ENCODE measurements at regions of chr19 and their contacts with region 1.

Region 1: GRCh38 chr19:39052243-39052746 is 19.9 kb upstream of the FBXO27 start:
- DNase-seq: peak; percentile 53
- H3K4me3 ChIP-seq: no peak overlapping the region
- H3K27ac ChIP-seq: no peak overlapping the region
- H3K4me1 ChIP-seq: no peaks in the 10 kb centered on the region
- H3K27me3 ChIP-seq: peaks cover 0 to 1% of the 10 kb centered on the region in 2 experiments
- CTCF ChIP-seq: peak; percentile 79 to 89
- POLR2A ChIP-seq: no peak

Region 2: GRCh38 chr19:39031368-39032062 is 20.8 kb before region 1 on chr19:
- CTCF ChIA-PET with region 1: interaction called, 16 read pairs
- POLR2A ChIA-PET with region 1: no interaction called
- dilution Hi-C with region 1: no loop called
- intact Hi-C with region 1: no loop called
- DNase-seq: peak; percentile 51
- H3K4me3 ChIP-seq: peak overlapping the region; percentile 28 to 58 (median 53)
- H3K27ac ChIP-seq: no peak overlapping the region
- H3K4me1 ChIP-seq: peaks cover 5% of the 10 kb centered on the region
- H3K27me3 ChIP-seq: no peaks in the 10 kb centered on the region
- CTCF ChIP-seq: no peak
- POLR2A ChIP-seq: no peak

Region 3: GRCh38 chr19:39064405-39064804 is 12.1 kb after region 1 on chr19:
- CTCF ChIA-PET with region 1: interaction called, 31 read pairs
- POLR2A ChIA-PET with region 1: no interaction called
- dilution Hi-C with region 1: no loop called
- intact Hi-C with region 1: no loop called
- DNase-seq: no peak
- H3K4me3 ChIP-seq: no peak overlapping the region
- H3K27ac ChIP-seq: no peak overlapping the region
- H3K4me1 ChIP-seq: no peaks in the 10 kb centered on the region
- H3K27me3 ChIP-seq: no peaks in the 10 kb centered on the region
- CTCF ChIP-seq: no peak
- POLR2A ChIP-seq: no peak

Region 4: DNA sequence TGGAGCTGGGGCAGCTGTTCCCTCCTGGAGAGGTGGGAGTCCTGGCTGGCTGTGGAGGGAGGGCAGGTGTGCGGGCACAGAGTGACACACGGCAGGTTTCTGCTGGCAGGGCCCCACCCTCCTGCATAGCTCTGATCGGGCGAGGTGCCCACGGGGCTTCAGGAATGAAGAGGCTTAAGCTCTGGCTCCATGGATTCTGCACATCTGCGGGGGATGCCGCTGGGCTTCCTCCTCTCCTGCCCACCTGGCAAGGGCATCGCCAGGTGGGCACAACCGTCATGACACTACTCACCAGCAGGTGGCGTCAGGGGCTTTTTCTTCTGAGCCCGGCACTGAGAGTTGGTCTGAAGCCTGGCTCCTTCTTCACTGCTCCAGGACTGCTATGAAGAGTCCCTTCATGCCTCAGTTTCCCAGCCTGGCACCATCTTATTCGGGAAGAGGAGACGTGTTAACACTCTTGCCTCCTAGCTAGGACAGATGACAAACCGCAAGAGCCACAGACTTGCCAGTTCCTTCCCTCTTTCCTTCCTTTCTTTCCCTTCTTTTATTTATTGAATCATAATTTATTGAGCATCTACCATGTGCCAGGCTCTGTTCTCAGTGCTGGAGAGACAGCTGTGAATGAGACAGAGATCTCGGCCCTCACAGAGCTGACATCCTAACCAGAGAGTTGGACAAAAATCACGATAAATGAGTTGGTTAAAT is 58.1 kb after region 1 on chr19:
- CTCF ChIA-PET with region 1: interaction called, 16 read pairs
- POLR2A ChIA-PET with region 1: no interaction called
- dilution Hi-C with region 1: no loop called
- intact Hi-C with region 1: loop called (anchors 1 kb)
- DNase-seq: peak; percentile 28
- H3K4me3 ChIP-seq: no peak overlapping the region
- H3K27ac ChIP-seq: no peak overlapping the region
- H3K4me1 ChIP-seq: no peaks in the 10 kb centered on the region
- H3K27me3 ChIP-seq: peaks cover 0 to 2% of the 10 kb centered on the region in 2 experiments
- CTCF ChIP-seq: peak; percentile 77 to 84
- POLR2A ChIP-seq: no peak

Region 5: GRCh38 chr19:39125554-39126311 is 73.4 kb after region 1 on chr19 and contains the start of gene PAK4:
- CTCF ChIA-PET with region 1: interaction called, 10 read pairs
- POLR2A ChIA-PET with region 1: no interaction called
- dilution Hi-C with region 1: no loop called
- intact Hi-C with region 1: loop called (anchors 1 kb)
- DNase-seq: peak; percentile 97
- H3K4me3 ChIP-seq: peak within 1 kb of the TSS; percentile 71 to 97 (median 85)
- H3K27ac ChIP-seq: peak within 1 kb of the TSS; percentile 39
- H3K4me1 ChIP-seq: peaks cover 18% of the 10 kb centered on the region
- H3K27me3 ChIP-seq: no peaks in the 10 kb centered on the region
- CTCF ChIP-seq: no peak
- POLR2A ChIP-seq: peak; percentile 71
- total RNA-seq, gene PAK4: 49.6 and 55.4 TPM in 2 replicates

Region 6: GRCh38 chr19:39199025-39199424 is 146.7 kb after region 1 on chr19:
- CTCF ChIA-PET with region 1: no interaction called
- POLR2A ChIA-PET with region 1: no interaction called
- dilution Hi-C with region 1: no loop called
- intact Hi-C with region 1: loop called (anchors 5 kb)
- DNase-seq: peak; percentile 18
- H3K4me3 ChIP-seq: no peak overlapping the region
- H3K27ac ChIP-seq: no peak overlapping the region
- H3K4me1 ChIP-seq: no peaks in the 10 kb centered on the region
- H3K27me3 ChIP-seq: peaks cover 33 to 38% of the 10 kb centered on the region in 2 experiments
- CTCF ChIP-seq: no peak
- POLR2A ChIP-seq: no peak